K562 (cell line): ENCODE measurements at regions of chr2 and their contacts with region 1.

Region 1: GRCh38 chr2:170235860-170236679 is 58.1 kb downstream of the MYO3B start:
- DNase-seq: peak; percentile 83 to 89 (median 84)
- ATAC-seq: peak; percentile 89
- H3K4me3 ChIP-seq: no peak overlapping the region
- H3K27ac ChIP-seq: no peak overlapping the region; the same call in 1 of the 3 replicates
- H3K4me1 ChIP-seq: peaks cover 0 to 57% of the 10 kb centered on the region in 2 experiments; a peak in 3 of 5 replicates
- H3K27me3 ChIP-seq: no peaks in the 10 kb centered on the region
- CTCF ChIP-seq: peak; percentile 69 to 92 (median 86)
- EP300 ChIP-seq: peak; percentile 94
- POLR2A ChIP-seq: no peak
- RAD21 ChIP-seq: peak; percentile 99

Region 2: DNA sequence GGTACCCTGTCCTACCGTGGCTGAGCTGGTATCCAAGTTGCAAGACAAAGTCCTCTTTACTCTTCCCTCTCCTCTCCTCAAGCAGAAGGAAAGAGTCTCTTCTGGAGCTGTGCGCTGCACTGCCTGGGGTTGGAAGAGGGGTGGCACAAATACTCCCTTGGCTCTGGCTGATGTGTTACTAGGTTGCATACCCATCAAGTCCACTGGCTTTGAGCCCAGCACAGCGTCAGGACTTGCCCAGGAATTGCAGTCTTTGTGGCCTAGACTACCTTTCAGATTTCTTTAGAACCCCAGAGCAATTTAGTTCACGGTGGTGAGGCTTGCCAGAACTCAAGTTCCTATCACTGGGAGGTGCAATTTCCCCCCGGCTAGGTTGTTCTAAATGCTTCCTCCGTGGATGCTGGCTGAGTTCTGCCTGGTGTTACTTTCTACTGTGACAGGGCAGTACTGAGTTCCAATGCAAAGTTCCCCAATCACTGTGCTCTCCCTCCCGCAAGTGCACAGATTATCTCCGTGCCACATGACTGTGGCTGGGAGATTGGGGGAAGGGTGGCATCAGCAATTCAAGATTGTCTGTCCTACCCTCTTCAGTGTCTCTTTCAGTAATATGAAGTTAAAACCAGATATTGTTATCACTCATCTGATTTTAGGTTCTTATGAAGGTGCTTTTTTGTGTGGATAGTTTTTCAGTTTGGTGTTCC is 44.8 kb before region 1 on chr2:
- CTCF ChIA-PET with region 1: no interaction called
- POLR2A ChIA-PET with region 1: no interaction called
- in situ Hi-C with region 1: no loop called
- intact Hi-C with region 1: no loop called
- DNase-seq: peak in 1 of 4 experiments; percentile 25
- ATAC-seq: peak; percentile 78
- H3K4me3 ChIP-seq: no peak overlapping the region
- H3K27ac ChIP-seq: no peak overlapping the region
- H3K4me1 ChIP-seq: no peaks in the 10 kb centered on the region
- H3K27me3 ChIP-seq: no peaks in the 10 kb centered on the region
- CTCF ChIP-seq: no peak
- EP300 ChIP-seq: no peak
- POLR2A ChIP-seq: no peak
- RAD21 ChIP-seq: no peak; a peak in 1 of 4 replicates

Region 3: GRCh38 chr2:170221317-170222288 is 14.5 kb before region 1 on chr2:
- CTCF ChIA-PET with region 1: no interaction called
- POLR2A ChIA-PET with region 1: interaction called, 14 read pairs
- in situ Hi-C with region 1: no loop called
- intact Hi-C with region 1: no loop called
- DNase-seq: no peak
- ATAC-seq: peak; percentile 37
- H3K4me3 ChIP-seq: no peak overlapping the region
- H3K27ac ChIP-seq: no peak overlapping the region
- H3K4me1 ChIP-seq: peaks cover 0 to 11% of the 10 kb centered on the region in 2 experiments; a peak in 2 of 5 replicates
- H3K27me3 ChIP-seq: no peaks in the 10 kb centered on the region
- CTCF ChIP-seq: no peak
- EP300 ChIP-seq: no peak
- POLR2A ChIP-seq: no peak
- RAD21 ChIP-seq: no peak

Region 4: DNA sequence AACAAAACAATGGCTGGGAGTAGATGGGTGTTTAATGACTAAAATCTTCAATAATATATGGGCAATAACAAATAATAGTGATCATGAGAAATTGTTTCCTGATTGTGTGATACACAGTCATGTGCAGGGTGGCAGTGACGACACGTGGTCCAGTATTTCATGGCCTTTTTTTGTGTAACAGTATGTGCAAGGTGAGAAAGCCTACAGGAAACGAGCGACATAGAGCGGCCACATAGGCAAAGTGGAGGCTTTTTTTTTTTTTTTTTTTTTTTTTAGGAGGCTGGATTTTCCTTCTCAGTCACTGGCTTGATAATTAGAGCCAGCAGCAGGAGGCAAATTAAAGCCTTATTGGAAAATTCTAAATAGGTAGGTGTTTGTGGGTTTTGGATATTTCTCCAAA is 65.6 kb after region 1 on chr2:
- CTCF ChIA-PET with region 1: no interaction called
- POLR2A ChIA-PET with region 1: no interaction called
- in situ Hi-C with region 1: no loop called
- intact Hi-C with region 1: loop called (anchors 5 kb)
- DNase-seq: no peak
- ATAC-seq: no peak
- H3K4me3 ChIP-seq: no peak overlapping the region
- H3K27ac ChIP-seq: no peak overlapping the region
- H3K4me1 ChIP-seq: peaks cover 6 to 30% of the 10 kb centered on the region in 2 experiments; a peak in 4 of 5 replicates
- H3K27me3 ChIP-seq: no peaks in the 10 kb centered on the region
- CTCF ChIP-seq: no peak
- EP300 ChIP-seq: no peak
- POLR2A ChIP-seq: no peak
- RAD21 ChIP-seq: no peak

Region 5: DNA sequence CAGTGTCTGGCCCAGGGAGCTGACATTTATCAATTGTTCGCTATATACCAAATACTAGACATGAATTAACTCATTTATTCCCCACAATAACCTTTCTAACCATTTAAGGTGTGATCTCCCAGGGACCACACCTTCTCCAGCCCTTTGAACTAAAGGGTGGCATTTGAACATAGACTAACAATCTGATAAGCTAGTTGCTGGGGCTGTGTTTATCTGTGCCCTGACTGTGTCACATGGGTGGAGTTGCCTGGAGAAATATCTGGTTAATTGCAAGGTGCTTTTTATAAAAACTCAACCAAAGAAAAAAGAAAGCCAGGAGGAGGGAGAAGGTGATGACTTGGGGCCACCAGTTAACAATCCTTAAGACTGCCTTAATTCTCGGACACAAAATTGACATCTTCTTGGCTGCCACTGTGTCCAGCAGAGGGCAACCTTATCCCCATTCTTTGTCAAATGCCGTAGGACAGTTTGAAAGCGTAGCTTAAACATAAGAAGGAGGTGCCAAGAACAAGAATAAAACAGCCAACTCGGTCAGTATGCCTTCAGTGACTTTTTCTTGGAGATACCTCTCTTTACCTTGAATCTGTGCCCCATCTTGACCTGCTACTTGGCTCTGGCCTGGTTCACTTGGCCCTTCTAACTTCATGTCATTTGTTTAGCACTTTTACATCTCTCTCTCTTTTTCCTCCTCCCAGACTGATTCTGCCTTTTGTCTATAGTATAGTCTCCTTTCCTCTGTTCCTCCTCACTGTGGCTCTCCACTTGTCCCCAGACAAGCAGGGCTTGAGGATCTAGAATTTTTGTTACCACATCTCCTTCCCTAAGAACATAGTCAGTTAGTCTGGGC is 125.2 kb after region 1 on chr2:
- CTCF ChIA-PET with region 1: interaction called, 4 read pairs
- POLR2A ChIA-PET with region 1: no interaction called
- in situ Hi-C with region 1: loop called (anchors 5 kb)
- intact Hi-C with region 1: loop called (anchors 1 kb)
- DNase-seq: peak; percentile 57 to 90 (median 64)
- ATAC-seq: peak; percentile 85
- H3K4me3 ChIP-seq: 0 out of 2 replicates have a peak overlapping the region, but pooled peaks have one; percentile 0
- H3K27ac ChIP-seq: peak overlapping the region; percentile 75
- H3K4me1 ChIP-seq: peaks cover 0 to 56% of the 10 kb centered on the region in 2 experiments; a peak in 4 of 5 replicates
- H3K27me3 ChIP-seq: no peaks in the 10 kb centered on the region
- CTCF ChIP-seq: peak; percentile 81 to 95 (median 89)
- EP300 ChIP-seq: no peak
- POLR2A ChIP-seq: no peak
- RAD21 ChIP-seq: peak; percentile 75 to 83

Region 6: GRCh38 chr2:170377500-170378207 is 141.6 kb after region 1 on chr2:
- CTCF ChIA-PET with region 1: no interaction called
- POLR2A ChIA-PET with region 1: no interaction called
- in situ Hi-C with region 1: no loop called
- intact Hi-C with region 1: no loop called
- DNase-seq: no peak
- ATAC-seq: no peak
- H3K4me3 ChIP-seq: no peak overlapping the region
- H3K27ac ChIP-seq: no peak overlapping the region
- H3K4me1 ChIP-seq: no peaks in the 10 kb centered on the region
- H3K27me3 ChIP-seq: no peaks in the 10 kb centered on the region
- CTCF ChIP-seq: peak in 1 of 3 experiments; percentile 21; a peak in 2 of 6 replicates
- EP300 ChIP-seq: no peak
- POLR2A ChIP-seq: no peak
- RAD21 ChIP-seq: peak; percentile 11 to 16; a peak in 2 of 4 replicates

Region 7: GRCh38 chr2:170873035-170873692 is 637.1 kb after region 1 on chr2:
- CTCF ChIA-PET with region 1: no interaction called
- POLR2A ChIA-PET with region 1: no interaction called
- in situ Hi-C with region 1: no loop called
- intact Hi-C with region 1: loop called (anchors 5 kb)
- DNase-seq: peak; percentile 86 to 91 (median 88)
- ATAC-seq: peak; percentile 99
- H3K4me3 ChIP-seq: no peak overlapping the region
- H3K27ac ChIP-seq: peak overlapping the region; percentile 49
- H3K4me1 ChIP-seq: no peaks in the 10 kb centered on the region; a peak in 2 of 5 replicates
- H3K27me3 ChIP-seq: peaks cover 4 to 10% of the 10 kb centered on the region in 2 experiments; a peak in 3 of 5 replicates
- CTCF ChIP-seq: peak; percentile 92 to 98 (median 96)
- EP300 ChIP-seq: no peak
- POLR2A ChIP-seq: no peak
- RAD21 ChIP-seq: peak; percentile 72 to 86